ENCODE measurements at regions of chr15 and their contacts with region 1.

Region 1: GRCh38 chr15:63891079-63891767 is 57.5 kb upstream of the HERC1 start:
- DNase-seq: peak; percentile 88
- ATAC-seq: peak; percentile 84

Region 2: GRCh38 chr15:63752075-63752684 is 139.0 kb before region 1 on chr15:
- intact Hi-C with region 1: loop called (anchors 2 kb)
- DNase-seq: no peak
- ATAC-seq: peak; percentile 88

Region 3: DNA sequence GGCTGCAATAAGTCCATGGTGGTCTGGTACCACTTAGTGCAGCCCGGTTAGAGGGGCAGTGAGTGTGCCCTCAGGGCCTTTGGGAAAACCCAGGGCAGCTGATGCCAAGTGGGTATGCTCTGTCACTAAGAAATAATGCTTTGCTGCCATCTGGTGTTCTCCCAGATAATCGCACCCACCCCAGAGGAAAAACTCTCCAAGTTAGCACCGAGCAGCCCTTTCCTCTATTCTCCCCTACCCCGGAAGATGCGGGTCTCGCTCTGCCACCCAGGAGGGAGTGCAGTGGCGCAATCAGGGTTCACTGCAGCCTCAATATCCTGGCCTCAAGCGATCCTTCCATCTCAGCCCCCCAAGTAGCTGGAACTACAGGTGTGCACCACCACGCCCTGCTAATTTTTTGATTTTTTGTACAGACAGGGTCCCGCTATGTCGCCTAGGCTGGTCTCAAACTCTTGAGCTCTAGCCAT is 176.4 kb after region 1 on chr15:
- intact Hi-C with region 1: loop called (anchors 10 kb)
- DNase-seq: peak; percentile 60
- ATAC-seq: peak; percentile 83

Region 4: DNA sequence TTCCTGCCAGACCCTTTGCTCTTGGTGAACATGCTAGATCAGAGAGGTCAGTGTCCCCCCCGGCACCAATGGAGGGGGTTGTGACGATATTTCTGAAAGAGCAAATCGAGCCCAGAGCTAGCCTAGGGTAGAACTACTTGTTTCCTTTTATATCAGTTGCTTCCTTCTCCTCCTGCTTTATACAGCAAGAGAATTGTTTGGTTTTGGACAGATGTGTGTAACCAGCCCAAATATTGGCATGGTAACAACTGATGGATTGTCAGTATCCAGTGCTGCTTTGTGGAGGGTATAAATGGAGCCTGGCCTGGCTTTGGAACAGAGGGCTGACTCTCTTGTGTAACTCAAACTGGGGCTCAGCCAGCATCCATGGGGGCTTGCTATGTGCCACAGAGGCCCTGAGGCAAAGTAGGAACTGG is 231.7 kb after region 1 on chr15:
- intact Hi-C with region 1: no loop called
- DNase-seq: no peak
- ATAC-seq: peak; percentile 28

Measured in Right ventricle myocardium superior (tissue), 1 donor.